Activated CD4-positive, alpha-beta T cell treated with anti-CD3 and anti-CD28 coated beads for 36 hours (primary cell): ENCODE measurements at regions of chrX and their contacts with region 1.

Region 1: GRCh38 chrX:79366873-79367749 is at the start of gene ITM2A:
- DNase-seq: peak; percentile 78
- ATAC-seq: peak; percentile 80
- H3K4me3 Mint-ChIP-seq: peak within 1 kb of the TSS; percentile 96
- H3K27ac Mint-ChIP-seq: peak within 1 kb of the TSS; percentile 96
- H3K4me1 Mint-ChIP-seq: peaks cover 29% of the 10 kb centered on the region
- H3K27me3 Mint-ChIP-seq: no peaks in the 10 kb centered on the region
- total RNA-seq, gene ITM2A: 89.0 to 112 TPM

Region 2: DNA sequence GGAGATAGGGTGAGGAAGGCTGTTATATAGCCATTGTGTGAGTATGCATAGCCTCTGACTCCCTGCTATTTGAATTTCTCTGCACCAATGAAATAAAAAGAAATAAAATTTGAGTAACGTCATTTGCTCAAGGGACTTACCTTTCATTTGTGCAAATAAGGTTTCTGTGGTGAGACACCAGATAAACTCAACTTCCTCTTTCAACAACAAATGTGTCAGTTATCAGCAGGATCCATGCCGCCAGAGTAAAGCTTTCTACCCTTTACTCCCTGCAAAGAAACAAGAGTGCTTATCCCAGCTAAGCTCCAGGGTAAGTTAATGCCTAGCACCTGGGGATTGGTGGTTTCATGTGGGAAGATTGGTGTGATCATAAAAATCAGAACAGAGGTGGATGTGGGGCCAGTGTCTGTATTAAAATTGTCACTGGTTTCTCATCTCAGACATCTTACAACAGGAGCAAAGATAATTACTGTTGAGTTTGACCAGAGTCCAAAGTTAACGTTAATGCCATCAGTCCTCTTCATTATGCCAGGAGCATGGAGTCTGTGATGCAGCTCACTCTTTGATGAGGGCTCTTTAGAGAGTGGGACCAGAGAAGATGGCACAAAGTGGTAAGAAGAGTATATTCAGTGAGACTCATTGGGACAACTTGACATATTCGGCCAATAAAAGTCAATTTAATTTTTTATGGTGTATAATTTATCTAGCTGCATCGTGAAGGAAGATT is 421.8 kb before region 1 on chrX and contains the start of gene P2RY10:
- CTCF ChIA-PET with region 1: no interaction called
- POLR2A ChIA-PET with region 1: no interaction called
- intact Hi-C with region 1: loop called (anchors 2 to 5 kb)
- DNase-seq: peak; percentile 35
- ATAC-seq: peak; percentile 79
- H3K4me3 Mint-ChIP-seq: peak within 1 kb of the TSS; percentile 90
- H3K27ac Mint-ChIP-seq: peak within 1 kb of the TSS; percentile 96
- H3K4me1 Mint-ChIP-seq: peaks cover 57% of the 10 kb centered on the region
- H3K27me3 Mint-ChIP-seq: no peaks in the 10 kb centered on the region
- total RNA-seq, gene P2RY10: 30.4 to 65.7 TPM

Region 3: DNA sequence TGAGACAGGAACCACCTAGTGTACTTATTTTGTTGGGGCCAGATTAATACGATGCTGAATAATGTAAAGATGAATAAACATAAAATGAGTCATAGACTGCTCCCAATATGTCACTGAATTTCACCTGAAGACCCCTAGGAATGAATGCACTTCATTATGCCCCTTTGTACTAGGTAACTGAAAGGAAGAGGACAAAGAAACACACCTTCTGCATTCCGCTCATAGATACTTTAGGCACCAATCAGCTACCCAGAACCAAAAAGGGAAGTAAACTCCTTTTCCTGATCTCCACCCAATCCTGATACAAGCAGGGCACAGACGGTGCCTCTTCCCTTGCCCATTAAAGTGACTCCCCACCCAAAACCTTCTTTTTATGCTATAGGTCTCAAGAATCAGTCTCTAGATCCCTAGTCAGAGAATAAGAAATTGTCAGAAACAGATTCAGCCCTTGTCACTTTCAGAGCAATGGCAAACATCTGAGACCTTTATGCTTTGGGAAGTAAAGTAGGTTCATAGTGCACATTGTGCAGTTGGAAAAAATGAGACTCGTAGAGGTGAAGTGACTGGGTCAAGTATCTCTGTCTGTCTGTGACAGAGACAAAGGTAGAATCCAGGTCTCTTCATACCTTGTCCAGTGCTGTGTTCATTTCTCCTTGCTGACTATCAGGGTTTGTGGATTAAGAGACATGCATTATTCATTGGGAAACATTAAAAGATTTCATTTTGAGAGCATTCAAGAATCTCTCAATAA is 220.3 kb before region 1 on chrX:
- CTCF ChIA-PET with region 1: no interaction called
- POLR2A ChIA-PET with region 1: no interaction called
- intact Hi-C with region 1: loop called in 1 of 2 experiments (anchors 5 kb)
- DNase-seq: no peak
- ATAC-seq: peak; percentile 52
- H3K4me3 Mint-ChIP-seq: peak overlapping the region; percentile 88
- H3K27ac Mint-ChIP-seq: peak overlapping the region; percentile 97
- H3K4me1 Mint-ChIP-seq: peaks cover 33% of the 10 kb centered on the region
- H3K27me3 Mint-ChIP-seq: no peaks in the 10 kb centered on the region

Region 4: DNA sequence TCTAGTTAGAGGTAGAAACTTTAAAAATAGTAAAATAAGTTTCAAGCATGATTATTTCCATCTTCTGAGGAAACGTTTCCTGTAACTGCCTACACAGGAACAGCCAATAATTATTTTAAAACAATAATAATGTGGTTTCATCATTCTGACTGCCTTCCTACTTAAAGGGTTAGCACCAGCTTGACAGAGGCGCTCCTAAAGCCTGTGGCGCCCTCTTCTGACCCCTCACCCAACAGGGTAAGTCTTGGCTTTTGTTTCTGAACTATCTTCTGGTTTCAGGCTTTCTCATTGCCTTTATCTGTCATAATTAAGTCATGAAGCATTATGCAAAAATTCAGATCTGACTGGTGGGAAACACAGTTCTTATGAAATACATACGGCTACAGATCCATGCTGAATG is 96.7 kb before region 1 on chrX:
- CTCF ChIA-PET with region 1: interaction called, 4 read pairs
- POLR2A ChIA-PET with region 1: no interaction called
- intact Hi-C with region 1: loop called (anchors 5 kb)
- DNase-seq: peak; percentile 87
- ATAC-seq: peak; percentile 99
- H3K4me3 Mint-ChIP-seq: no peak overlapping the region
- H3K27ac Mint-ChIP-seq: peak overlapping the region; percentile 47
- H3K4me1 Mint-ChIP-seq: peaks cover 44% of the 10 kb centered on the region
- H3K27me3 Mint-ChIP-seq: no peaks in the 10 kb centered on the region

Region 5: GRCh38 chrX:79412972-79413371 is 45.9 kb after region 1 on chrX:
- CTCF ChIA-PET with region 1: interaction called, 12 read pairs
- POLR2A ChIA-PET with region 1: no interaction called
- intact Hi-C with region 1: loop called (anchors 2 to 5 kb)
- DNase-seq: no peak
- ATAC-seq: no peak
- H3K4me3 Mint-ChIP-seq: peak overlapping the region; percentile 69
- H3K27ac Mint-ChIP-seq: peak overlapping the region; percentile 60
- H3K4me1 Mint-ChIP-seq: peaks cover 25% of the 10 kb centered on the region
- H3K27me3 Mint-ChIP-seq: no peaks in the 10 kb centered on the region

Region 6: DNA sequence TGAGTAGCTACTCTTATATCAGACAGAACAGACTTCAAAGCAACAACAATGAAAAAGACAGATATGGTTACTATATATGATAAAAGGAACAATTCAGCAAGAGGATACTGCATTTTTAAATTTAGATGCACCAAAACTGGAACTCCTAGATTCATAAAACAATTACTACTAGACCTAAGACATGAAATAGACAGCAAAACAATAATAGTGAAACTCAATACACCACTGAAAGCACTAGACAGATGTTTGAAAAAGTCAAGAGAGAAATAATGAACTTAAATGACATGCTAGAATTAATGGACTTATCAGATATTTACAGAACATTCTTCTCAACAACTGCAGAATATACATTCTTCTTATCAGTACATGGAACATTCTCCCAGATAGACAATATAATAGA is 99.5 kb after region 1 on chrX:
- CTCF ChIA-PET with region 1: no interaction called
- POLR2A ChIA-PET with region 1: no interaction called
- intact Hi-C with region 1: no loop called
- DNase-seq: no peak
- ATAC-seq: no peak
- H3K4me3 Mint-ChIP-seq: no peak overlapping the region
- H3K27ac Mint-ChIP-seq: no peak overlapping the region
- H3K4me1 Mint-ChIP-seq: no peaks in the 10 kb centered on the region
- H3K27me3 Mint-ChIP-seq: peaks cover 2% of the 10 kb centered on the region